Sciatic nerve (tissue), 2 donors: ENCODE measurements at regions of chr16 and their contacts with region 1.

Region 1: DNA sequence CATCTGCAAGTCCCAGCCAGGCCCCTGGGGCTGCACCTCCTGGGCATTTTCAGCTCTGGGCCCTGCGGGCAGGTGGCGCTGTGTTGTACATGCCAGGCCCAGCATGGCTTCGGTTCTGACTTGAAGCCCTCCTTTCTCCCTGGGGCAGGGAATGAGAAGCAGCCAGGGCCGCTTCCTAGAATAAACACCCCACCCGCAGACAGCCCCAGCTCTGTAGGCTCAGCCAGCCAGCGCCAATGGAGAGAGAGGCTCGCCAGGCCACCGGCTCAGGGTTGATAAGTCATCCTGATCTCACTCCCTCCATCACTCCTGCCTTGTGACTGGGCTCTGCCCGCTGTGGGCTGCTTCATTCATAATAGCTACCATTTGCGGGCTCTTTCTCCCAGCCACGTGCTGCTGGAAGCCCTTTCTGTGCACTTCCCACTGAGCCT is 6.0 kb upstream of the GLIS2 start:
- DNase-seq: no peak
- ATAC-seq: peak; percentile 62

Region 2: DNA sequence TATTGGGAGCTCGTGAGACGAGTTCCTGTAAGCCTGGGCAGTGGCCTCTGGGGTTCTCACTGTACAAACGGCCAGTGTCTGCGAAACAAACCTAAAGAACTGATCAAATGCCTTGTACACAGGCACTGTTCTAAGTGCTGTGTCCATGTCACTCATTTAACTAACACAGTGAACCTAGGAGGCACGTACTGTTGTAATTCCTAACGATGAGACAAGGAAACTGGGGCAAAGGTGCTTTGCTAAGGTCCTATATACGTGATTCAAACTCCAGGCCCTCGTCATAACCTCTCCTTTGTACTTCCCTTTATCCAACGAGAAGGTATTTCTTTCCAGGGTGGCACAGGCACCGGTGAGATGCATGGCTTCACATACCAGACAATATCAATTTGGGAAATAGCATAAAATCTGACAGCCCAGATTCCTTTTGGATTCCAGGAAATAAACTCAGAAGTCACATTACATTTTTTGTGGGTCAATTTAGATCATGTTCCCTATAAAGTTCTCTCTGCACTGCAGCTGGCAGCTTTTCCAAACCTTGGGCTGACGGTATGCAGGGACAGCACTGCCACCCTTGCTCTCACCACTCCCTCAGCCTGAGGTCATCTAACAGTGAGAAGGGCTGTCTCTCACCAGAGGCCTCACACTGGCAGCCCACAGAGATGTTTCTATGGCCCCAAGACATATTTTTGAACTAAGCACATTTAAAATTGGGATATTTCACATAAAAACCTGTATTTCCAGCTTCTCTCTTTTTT is 518.9 kb after region 1 on chr16:
- intact Hi-C with region 1: loop called (anchors 5 kb)
- DNase-seq: no peak
- ATAC-seq: no peak